ENCODE measurements at regions of chr1 and their contacts with region 1.

Region 1: GRCh38 chr1:150363426-150364230 is at the start of gene RPRD2:
- DNase-seq: peak; percentile 99 to 100
- H3K4me3 ChIP-seq: peak within 1 kb of the TSS; percentile 62
- H3K4me3 Mint-ChIP-seq: peak within 1 kb of the TSS; percentile 85
- H3K27ac Mint-ChIP-seq: peak within 1 kb of the TSS; percentile 94
- H3K4me1 ChIP-seq: peaks cover 7% of the 10 kb centered on the region; the same call in 1 of the 2 replicates
- H3K4me1 Mint-ChIP-seq: peaks cover 13% of the 10 kb centered on the region
- H3K27me3 ChIP-seq: no peaks in the 10 kb centered on the region
- H3K27me3 Mint-ChIP-seq: no peaks in the 10 kb centered on the region
- CTCF ChIP-seq: no peak
- total RNA-seq, gene RPRD2: 24.3 and 25.0 TPM in 2 replicates

Region 2: DNA sequence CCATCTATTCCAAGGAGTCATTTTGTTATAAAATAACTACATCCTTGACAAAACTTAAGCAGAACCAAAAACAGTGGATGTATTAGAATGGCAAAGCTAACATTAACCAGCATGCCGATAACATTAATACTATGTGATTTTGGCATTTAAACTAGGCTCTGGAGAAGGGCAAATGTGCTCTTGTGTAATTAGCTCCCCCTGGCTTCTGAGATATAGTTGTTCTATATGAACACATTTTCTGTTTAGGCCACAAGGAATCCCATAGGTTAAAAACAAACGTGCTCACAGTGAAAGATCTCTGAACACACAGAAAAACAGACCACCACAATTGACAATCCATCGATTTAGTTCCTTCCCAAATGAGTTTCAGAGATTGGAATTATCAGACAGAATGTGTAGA is 66.2 kb after region 1 on chr1:
- CTCF ChIA-PET with region 1: interaction called, 3 read pairs
- POLR2A ChIA-PET with region 1: no interaction called
- intact Hi-C with region 1: loop called (anchors 5 kb)
- DNase-seq: no peak
- H3K4me3 ChIP-seq: no peak overlapping the region
- H3K4me3 Mint-ChIP-seq: no peak overlapping the region
- H3K27ac Mint-ChIP-seq: peak overlapping the region; percentile 5
- H3K4me1 ChIP-seq: 0 out of 2 replicates have a peak, but pooled peaks cover 4% of the 10 kb centered on the region
- H3K4me1 Mint-ChIP-seq: peaks cover 15% of the 10 kb centered on the region
- H3K27me3 ChIP-seq: no peaks in the 10 kb centered on the region
- H3K27me3 Mint-ChIP-seq: no peaks in the 10 kb centered on the region
- CTCF ChIP-seq: peak; percentile 16 to 37

Measured in Caco-2 (cell line).